MCF 10A (cell line): ENCODE measurements at regions of chr2 and their contacts with region 1.

Region 1: DNA sequence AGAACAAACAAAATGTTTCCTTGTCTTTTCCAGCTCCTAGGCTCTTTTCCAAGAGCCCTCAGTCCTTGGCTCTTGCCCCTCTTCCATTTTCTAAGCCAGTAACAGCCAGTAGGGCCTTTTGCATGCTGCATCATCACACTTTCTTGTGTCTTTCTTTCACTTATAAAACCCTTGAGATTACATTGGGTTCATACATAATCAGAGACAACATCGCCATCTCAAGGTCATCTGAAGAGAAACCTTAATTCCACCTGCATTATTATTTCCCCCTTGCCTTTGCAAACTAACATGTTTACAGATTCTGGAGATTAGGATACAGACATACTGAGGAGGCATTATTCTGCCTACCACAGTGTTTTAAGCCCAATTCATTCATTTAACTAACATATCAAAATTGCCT is 697.3 kb downstream of the TRIB2 start:
- DNase-seq: peak; percentile 21
- H3K4me3 Mint-ChIP-seq: no peak overlapping the region
- H3K27ac Mint-ChIP-seq: no peak overlapping the region
- H3K4me1 Mint-ChIP-seq: no peaks in the 10 kb centered on the region
- H3K27me3 Mint-ChIP-seq: no peaks in the 10 kb centered on the region
- CTCF ChIP-seq: no peak

Region 2: DNA sequence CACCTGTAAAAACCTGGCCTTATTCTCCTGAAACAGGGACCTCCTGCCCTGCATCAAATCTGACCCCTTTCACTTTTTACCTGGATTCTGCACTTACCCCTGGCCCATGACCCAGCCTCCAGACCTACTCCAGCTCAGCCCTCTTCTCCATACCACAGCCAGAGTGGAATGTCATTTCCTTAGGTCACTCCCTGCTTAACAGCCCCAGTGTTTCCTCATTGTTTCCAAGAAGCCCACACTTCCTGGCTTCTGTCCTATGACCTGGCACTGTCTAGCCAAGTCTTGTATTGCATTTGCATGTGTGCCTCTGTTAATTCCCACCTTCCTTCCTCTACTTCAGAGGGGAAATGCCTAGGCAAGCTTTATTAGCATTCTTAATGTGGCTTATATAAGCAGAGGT is 748.7 kb before region 1 on chr2:
- CTCF ChIA-PET with region 1: no interaction called
- POLR2A ChIA-PET with region 1: no interaction called
- intact Hi-C with region 1: no loop called
- DNase-seq: no peak
- H3K4me3 Mint-ChIP-seq: no peak overlapping the region
- H3K27ac Mint-ChIP-seq: no peak overlapping the region
- H3K4me1 Mint-ChIP-seq: peaks cover 10% of the 10 kb centered on the region
- H3K27me3 Mint-ChIP-seq: no peaks in the 10 kb centered on the region
- CTCF ChIP-seq: no peak

Region 3: DNA sequence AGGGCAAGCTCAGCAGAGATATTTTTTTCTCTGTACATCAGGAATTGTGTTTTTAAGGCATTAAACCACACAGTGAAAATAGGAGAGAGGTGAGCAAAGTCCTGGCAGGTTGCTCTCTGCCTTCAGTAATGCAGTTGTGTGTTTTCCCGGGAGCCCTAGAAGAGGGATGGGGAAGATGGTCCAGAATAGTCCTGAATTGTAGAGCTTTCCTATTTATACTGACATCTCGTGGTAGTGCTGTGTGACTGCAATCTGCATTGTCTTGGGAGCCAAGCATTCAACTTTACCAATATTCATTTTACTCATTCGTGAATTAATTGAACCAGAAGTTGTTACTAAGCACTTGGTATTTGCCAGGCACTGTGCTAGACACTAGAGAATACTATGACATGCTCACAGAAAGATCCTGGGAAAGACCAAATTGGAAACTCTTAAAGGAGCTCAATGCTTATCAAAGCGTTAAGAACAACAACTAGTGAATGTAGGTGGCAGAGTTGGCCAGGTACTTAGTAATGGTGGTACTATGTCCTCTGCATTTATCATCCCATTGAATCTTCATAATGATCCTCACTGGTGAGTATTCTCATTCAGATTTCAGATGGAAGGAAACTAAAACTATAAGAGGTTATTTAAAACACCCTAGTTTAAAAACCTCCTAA is 482.7 kb before region 1 on chr2:
- CTCF ChIA-PET with region 1: no interaction called
- POLR2A ChIA-PET with region 1: no interaction called
- intact Hi-C with region 1: no loop called
- DNase-seq: peak; percentile 56
- H3K4me3 Mint-ChIP-seq: no peak overlapping the region
- H3K27ac Mint-ChIP-seq: no peak overlapping the region
- H3K4me1 Mint-ChIP-seq: peaks cover 19% of the 10 kb centered on the region
- H3K27me3 Mint-ChIP-seq: no peaks in the 10 kb centered on the region
- CTCF ChIP-seq: peak; percentile 87

Region 4: DNA sequence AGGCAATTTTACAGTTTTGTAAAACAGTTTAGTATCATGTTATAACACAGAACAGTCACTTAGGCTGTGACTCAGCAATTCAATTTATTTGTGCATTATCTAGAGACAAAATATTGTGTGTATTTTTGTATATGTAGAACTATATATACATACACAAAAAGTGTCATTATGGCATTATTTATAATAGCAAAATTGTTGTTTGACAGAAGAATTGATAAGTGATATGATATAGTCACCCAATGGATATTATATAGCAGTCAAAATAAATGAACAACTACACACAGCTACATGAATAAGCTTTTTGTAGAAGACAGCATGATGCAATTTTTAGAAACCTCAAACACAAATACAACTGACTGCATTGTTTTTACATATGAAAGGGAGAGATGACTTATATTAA is 363.2 kb before region 1 on chr2:
- CTCF ChIA-PET with region 1: no interaction called
- POLR2A ChIA-PET with region 1: no interaction called
- intact Hi-C with region 1: loop called (anchors 5 kb)
- DNase-seq: peak; percentile 13
- H3K4me3 Mint-ChIP-seq: no peak overlapping the region
- H3K27ac Mint-ChIP-seq: no peak overlapping the region
- H3K4me1 Mint-ChIP-seq: peaks cover 5% of the 10 kb centered on the region
- H3K27me3 Mint-ChIP-seq: peaks cover under 1% of the 10 kb centered on the region
- CTCF ChIP-seq: no peak

Region 5: GRCh38 chr2:13201924-13202323 is 212.1 kb before region 1 on chr2:
- CTCF ChIA-PET with region 1: no interaction called
- POLR2A ChIA-PET with region 1: no interaction called
- intact Hi-C with region 1: loop called (anchors 10 kb)
- DNase-seq: no peak
- H3K4me3 Mint-ChIP-seq: no peak overlapping the region
- H3K27ac Mint-ChIP-seq: no peak overlapping the region
- H3K4me1 Mint-ChIP-seq: no peaks in the 10 kb centered on the region
- H3K27me3 Mint-ChIP-seq: no peaks in the 10 kb centered on the region
- CTCF ChIP-seq: peak; percentile 28

Region 6: DNA sequence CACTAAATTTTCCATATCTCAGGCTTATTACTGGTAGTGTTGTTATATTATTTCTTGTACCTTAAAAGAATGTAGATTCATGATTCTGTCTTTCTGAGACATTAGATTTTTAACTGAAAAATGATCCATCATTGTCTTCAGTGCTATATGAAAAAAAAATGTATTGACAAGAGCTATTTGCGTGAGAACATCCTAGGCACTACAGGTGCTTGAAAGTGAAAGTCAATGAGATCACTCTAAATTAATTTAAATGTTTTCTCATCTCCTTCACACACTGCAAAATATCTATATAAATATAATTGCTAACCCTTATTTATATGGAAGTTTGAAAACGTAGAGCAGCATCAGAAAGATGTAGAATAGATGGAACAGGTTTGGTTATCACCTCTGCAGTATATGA is 12.7 kb before region 1 on chr2:
- CTCF ChIA-PET with region 1: no interaction called
- POLR2A ChIA-PET with region 1: no interaction called
- intact Hi-C with region 1: no loop called
- DNase-seq: no peak
- H3K4me3 Mint-ChIP-seq: no peak overlapping the region
- H3K27ac Mint-ChIP-seq: no peak overlapping the region
- H3K4me1 Mint-ChIP-seq: no peaks in the 10 kb centered on the region
- H3K27me3 Mint-ChIP-seq: no peaks in the 10 kb centered on the region
- CTCF ChIP-seq: no peak

Region 7: DNA sequence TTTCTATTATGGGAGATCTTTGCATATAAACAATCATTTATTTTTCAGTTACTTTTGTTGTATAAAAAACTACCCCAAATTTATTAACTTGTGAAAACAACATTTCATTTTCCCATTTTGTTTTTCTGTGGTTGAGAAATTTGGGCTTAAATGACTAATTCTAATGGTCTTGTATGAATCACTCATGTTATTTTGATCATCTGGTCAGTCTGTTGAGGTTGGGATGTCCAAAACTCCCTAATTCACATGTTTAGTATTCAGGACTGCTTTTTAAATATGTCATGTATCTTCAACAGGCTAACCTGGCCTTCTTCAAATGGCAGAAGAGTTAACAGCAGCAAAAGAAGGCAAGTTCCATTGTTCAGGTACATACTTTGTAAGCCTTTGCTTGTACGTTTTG is 90.8 kb after region 1 on chr2:
- CTCF ChIA-PET with region 1: no interaction called
- POLR2A ChIA-PET with region 1: no interaction called
- intact Hi-C with region 1: no loop called
- DNase-seq: peak; percentile 12
- H3K4me3 Mint-ChIP-seq: no peak overlapping the region
- H3K27ac Mint-ChIP-seq: peak overlapping the region; percentile 27
- H3K4me1 Mint-ChIP-seq: no peaks in the 10 kb centered on the region
- H3K27me3 Mint-ChIP-seq: no peaks in the 10 kb centered on the region
- CTCF ChIP-seq: no peak